Activated CD4-positive, alpha-beta T cell treated with anti-CD3 and anti-CD28 coated beads for 36 hours (primary cell): ENCODE measurements at regions of chr11 and their contacts with region 1.

Region 1: DNA sequence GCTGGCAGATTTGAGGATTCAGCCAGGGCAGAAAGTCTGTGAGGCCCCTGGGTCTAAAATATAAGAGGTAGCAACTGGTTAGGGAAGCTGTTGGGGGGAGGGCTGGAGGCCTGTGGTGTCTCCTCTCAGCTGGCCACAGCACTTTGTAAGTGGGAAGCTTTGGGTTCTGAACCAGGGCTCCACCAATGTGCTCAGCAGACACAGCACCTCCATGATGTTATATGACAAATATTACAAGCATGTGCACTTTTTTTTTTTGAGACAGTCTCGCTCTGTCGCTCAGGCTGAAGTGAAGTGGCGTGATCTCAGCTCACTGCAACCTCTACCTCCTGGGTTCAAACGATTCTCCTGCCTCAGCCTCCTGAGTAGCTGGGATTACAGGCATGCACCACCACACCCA is 8.0 kb downstream of the ARHGAP1 start:
- DNase-seq: no peak
- ATAC-seq: no peak
- H3K4me3 Mint-ChIP-seq: no peak overlapping the region
- H3K27ac Mint-ChIP-seq: no peak overlapping the region
- H3K4me1 Mint-ChIP-seq: peaks cover 1% of the 10 kb centered on the region
- H3K27me3 Mint-ChIP-seq: no peaks in the 10 kb centered on the region

Region 2: DNA sequence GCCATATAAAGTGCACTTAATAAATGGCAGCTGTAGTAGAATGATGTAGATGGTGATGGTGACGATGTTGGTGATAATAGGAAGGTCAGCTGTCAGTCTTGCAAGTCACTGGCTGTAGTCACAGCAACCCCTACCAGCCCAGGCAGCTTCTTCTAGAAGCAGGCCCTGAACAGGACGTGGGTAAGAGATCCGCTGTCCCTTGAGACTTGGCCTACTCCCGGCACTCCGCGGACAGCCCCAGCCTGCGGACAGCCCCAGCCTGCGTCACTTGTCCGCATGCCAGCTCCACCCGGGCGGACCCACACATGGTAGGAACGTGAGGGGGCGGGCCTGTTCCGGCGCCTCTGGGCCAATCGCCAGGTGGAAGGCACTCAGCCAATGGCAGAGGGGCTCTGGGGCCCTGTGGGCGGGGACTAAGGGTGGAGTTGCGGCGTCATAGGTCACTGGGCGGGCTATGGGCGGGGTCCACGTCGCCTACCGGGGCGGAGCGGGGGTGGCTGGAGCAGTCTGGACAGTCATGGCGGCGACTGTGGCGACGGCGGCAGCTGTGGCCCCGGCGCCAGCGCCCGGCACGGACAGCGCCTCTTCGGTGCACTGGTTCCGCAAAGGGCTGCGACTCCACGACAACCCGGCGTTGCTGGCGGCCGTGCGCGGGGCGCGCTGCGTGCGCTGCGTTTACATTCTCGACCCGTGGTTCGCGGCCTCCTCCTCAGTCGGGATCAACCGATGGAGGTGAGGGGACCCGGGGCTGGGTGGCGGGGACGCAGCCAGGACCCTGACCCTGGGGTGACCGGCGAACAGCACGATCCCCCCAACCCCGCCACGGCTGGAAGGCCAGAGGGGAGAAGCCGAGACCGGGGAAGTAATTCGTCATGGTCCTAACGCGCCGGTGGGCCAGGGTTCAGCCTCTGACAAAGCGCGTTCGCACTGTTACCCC is 845.2 kb before region 1 on chr11 and contains the start of gene CRY2:
- CTCF ChIA-PET with region 1: no interaction called
- POLR2A ChIA-PET with region 1: no interaction called
- intact Hi-C with region 1: no loop called
- DNase-seq: peak; percentile 99
- ATAC-seq: peak; percentile 90
- H3K4me3 Mint-ChIP-seq: peak within 1 kb of the TSS; percentile 74
- H3K27ac Mint-ChIP-seq: peak within 1 kb of the TSS; percentile 58
- H3K4me1 Mint-ChIP-seq: peaks cover 53% of the 10 kb centered on the region
- H3K27me3 Mint-ChIP-seq: no peaks in the 10 kb centered on the region
- total RNA-seq, gene CRY2: 13.1 to 14.1 TPM

Region 3: DNA sequence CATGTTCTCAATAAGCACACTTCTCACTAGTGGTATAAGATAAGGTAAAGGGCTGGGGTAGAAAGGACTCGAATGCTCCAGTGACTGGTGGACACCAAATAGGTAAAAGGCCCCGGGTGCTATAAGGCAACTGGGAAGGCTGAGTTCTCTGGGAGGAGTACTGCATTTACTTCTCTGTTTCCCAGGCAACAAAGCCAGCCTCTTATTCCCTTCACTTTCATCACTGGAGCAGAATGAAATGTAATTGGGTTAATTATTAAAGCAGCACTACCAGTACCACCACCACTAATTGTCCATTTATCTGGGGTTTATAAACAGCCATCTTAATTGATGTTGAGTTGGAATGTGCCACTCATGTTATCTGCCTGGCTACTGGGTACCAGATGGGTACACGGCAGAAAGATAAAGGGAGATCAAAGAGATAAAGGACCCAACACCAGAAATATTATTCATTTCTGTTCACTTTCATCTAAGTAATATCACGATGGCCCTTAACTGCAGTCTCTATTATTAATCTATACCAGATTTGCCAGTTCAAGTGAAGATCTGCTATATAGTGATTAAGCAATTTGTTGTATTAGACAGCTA is 206.5 kb before region 1 on chr11:
- CTCF ChIA-PET with region 1: no interaction called
- POLR2A ChIA-PET with region 1: no interaction called
- intact Hi-C with region 1: no loop called
- DNase-seq: no peak
- ATAC-seq: no peak
- H3K4me3 Mint-ChIP-seq: no peak overlapping the region
- H3K27ac Mint-ChIP-seq: no peak overlapping the region
- H3K4me1 Mint-ChIP-seq: peaks cover 6% of the 10 kb centered on the region
- H3K27me3 Mint-ChIP-seq: no peaks in the 10 kb centered on the region

Region 4: DNA sequence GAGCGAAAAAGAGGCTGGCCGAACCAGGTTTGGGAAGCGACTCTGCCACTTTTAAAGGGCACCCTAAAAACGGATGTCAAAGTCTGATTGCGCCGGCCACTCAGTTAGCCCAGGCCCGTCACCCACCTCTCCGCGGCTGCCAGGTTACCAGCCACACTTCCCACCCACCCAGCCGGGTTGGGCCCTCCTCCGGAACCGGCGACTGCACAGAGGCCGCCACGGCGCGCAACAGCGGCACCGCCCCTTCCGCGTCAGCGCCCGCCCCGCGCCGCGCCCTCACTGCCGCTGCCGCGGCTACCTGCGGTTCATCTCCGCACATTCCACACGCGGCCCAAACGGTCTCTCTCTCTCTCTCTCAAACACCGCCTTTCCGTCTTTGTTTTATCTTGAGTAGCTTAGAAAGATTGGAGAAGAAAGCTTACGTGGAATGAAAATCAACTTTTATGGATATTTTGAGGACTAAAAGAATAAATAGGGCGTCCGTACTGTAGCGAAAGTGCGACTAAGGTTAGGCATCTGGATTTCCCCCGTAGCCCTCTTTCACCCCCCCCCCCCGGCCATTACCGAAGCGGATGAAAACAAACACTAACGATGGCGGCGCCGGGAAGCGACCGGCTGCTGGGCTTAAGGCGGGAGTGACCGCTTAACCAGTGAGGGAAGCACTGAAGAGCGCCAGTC is 75.3 kb before region 1 on chr11 and contains the starts of genes ATG13 and HARBI1:
- CTCF ChIA-PET with region 1: no interaction called
- POLR2A ChIA-PET with region 1: no interaction called
- intact Hi-C with region 1: no loop called
- DNase-seq: peak; percentile 95
- ATAC-seq: peak; percentile 96
- H3K4me3 Mint-ChIP-seq: peak within 1 kb of the TSS; percentile 89
- H3K27ac Mint-ChIP-seq: peak within 1 kb of the TSS; percentile 100
- H3K4me1 Mint-ChIP-seq: peaks cover 31% of the 10 kb centered on the region
- H3K27me3 Mint-ChIP-seq: no peaks in the 10 kb centered on the region
- total RNA-seq, gene ATG13: 39.4 to 56.4 TPM
- total RNA-seq, gene HARBI1: 2.3 to 2.7 TPM

Region 5: DNA sequence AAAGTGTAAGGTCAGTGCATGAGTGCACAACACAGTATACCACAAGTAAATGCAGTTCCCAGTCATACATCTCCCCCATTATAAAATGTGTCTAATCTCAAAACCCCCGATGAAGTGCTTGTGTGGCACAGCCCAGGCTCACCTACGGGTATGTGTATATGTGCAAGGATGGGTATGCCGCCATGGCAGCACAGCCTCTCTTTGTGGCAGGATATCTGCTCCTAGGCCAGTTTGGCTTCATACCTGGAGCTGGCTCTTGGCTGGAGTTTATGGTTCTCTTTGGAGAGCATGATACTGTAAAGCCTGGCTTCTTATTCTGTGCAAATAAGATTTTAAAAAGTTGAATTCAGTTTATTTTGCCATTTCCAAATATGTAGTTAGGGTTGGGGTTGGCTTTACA is 967.6 kb after region 1 on chr11:
- CTCF ChIA-PET with region 1: no interaction called
- POLR2A ChIA-PET with region 1: interaction called, 12 read pairs
- intact Hi-C with region 1: no loop called
- DNase-seq: no peak
- ATAC-seq: no peak
- H3K4me3 Mint-ChIP-seq: no peak overlapping the region
- H3K27ac Mint-ChIP-seq: no peak overlapping the region
- H3K4me1 Mint-ChIP-seq: peaks cover 19% of the 10 kb centered on the region
- H3K27me3 Mint-ChIP-seq: peaks cover 2% of the 10 kb centered on the region